Left lung (tissue), 14 donors: ENCODE measurements at regions of chrX and their contacts with region 1.

Region 1: GRCh38 chrX:47193475-47194193 is at the start of gene UBA1:
- DNase-seq: peak; percentile 93 to 97 (median 95)
- ATAC-seq: peak; percentile 92
- H3K4me3 ChIP-seq: peak within 1 kb of the TSS; percentile 65 to 91
- H3K27ac ChIP-seq: peak within 1 kb of the TSS; percentile 89 to 96
- H3K4me1 ChIP-seq: peaks cover 32 to 50% of the 10 kb centered on the region in 2 donors
- H3K27me3 ChIP-seq: no peaks in the 10 kb centered on the region
- CTCF ChIP-seq: peak; percentile 78 to 83
- polyA plus RNA-seq, gene UBA1: 192 to 246 (median 218) TPM

Region 2: GRCh38 chrX:47311932-47312774 is 118.5 kb after region 1 on chrX:
- intact Hi-C with region 1: no loop called
- DNase-seq: peak in 2 of 4 donors; percentile 44 to 59
- ATAC-seq: peak; percentile 93
- H3K4me3 ChIP-seq: no peak overlapping the region
- H3K27ac ChIP-seq: peak overlapping the region in 1 of 2 donors; percentile 57
- H3K4me1 ChIP-seq: no peaks in the 10 kb centered on the region
- H3K27me3 ChIP-seq: peaks cover 0 to 8% of the 10 kb centered on the region in 2 donors
- CTCF ChIP-seq: peak in 1 of 2 donors; percentile 33

Region 3: DNA sequence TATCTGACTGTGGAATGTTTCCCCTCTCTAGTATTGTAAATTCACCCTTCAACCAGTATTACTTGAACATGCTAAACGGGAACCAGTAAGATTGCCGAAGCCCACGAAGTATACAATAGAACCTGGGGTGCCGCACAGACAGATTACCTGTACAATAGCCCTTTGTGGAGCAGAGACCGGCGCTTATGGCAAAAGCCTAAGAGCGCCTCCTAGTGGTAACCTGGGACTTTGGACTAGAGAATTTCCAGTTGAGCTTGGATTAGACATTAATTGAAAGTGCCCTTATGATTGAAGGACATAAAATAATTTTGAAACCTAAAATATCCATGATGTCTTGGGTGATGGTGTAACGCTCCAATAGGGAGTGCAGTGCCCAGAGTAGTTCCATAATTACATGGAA is 190.9 kb after region 1 on chrX:
- intact Hi-C with region 1: loop called in 1 of 2 experiments (anchors 5 kb)
- DNase-seq: peak in 3 of 4 donors; percentile 41 to 72 (median 49)
- ATAC-seq: peak; percentile 92
- H3K4me3 ChIP-seq: no peak overlapping the region
- H3K27ac ChIP-seq: no peak overlapping the region
- H3K4me1 ChIP-seq: no peaks in the 10 kb centered on the region
- H3K27me3 ChIP-seq: no peaks in the 10 kb centered on the region
- CTCF ChIP-seq: peak; percentile 59 to 62

Region 4: DNA sequence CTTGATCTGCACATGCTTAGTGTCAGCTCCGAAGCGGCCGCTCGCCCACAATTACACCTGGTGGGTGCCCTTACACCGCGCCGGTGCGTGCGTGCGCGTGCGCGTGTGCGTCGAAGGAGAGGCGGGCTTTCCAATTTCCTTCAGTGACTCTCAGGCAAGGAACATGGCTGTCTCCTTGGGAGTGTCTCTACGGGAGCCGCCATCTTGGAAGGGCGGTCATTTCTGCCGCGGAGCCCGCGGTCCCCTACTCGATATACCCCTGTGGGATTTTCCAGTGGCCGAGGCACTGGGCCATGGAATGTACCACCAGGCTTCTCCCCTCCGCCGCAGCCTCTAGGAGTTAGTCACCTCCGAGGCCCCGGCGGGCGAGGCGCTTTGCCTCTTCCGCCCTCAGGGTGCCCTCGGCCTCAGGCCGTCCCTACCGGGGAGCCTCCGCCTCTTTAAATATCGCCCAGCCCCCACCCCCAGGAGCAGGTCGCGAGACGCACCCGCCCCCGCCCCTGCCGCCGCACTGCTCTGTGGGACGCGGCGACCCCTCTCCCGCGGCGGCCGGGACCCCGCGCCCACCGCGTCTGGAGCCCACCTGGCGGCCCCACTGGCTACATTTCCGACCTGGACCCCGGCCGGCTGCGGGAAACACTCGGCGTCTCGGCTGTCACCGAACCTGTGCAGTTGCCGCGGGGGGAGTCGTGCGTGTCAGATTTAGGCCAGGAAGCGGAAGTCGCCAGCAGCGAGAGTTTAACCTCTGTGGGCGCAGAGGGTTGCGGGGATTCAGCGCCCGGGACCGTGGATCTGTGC is 289.1 kb after region 1 on chrX and contains the start of gene ZNF41:
- intact Hi-C with region 1: no loop called
- DNase-seq: peak; percentile 70 to 85 (median 79)
- ATAC-seq: peak; percentile 93
- H3K4me3 ChIP-seq: peak within 1 kb of the TSS; percentile 49 to 58
- H3K27ac ChIP-seq: peak within 1 kb of the TSS; percentile 92 to 94
- H3K4me1 ChIP-seq: peaks cover 0 to 8% of the 10 kb centered on the region in 2 donors
- H3K27me3 ChIP-seq: no peaks in the 10 kb centered on the region
- CTCF ChIP-seq: no peak
- polyA plus RNA-seq, gene ZNF41: 12.7 to 15.4 (median 14.4) TPM

Region 5: DNA sequence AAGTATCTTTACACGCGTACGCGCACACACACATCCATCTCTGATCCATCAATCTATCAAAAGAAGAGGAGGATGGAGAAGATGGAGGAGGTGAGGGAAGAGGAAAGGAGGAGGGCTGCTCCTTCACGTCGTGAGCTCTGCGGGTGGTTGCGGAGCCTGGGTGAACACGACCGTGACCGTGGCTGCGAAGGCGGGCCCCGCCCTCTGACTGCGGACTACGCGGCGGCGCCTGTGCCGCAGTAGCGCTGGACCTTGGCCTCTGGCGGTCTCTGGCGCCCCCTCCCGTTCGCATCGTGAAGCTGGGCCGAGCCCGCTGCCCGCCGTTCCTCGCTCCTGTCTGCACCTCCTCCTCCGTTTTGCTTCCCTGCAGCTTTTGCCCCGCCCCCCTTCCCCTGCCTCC is 329.7 kb after region 1 on chrX:
- intact Hi-C with region 1: loop called in 1 of 2 experiments (anchors 10 kb)
- DNase-seq: peak; percentile 65 to 97 (median 84)
- ATAC-seq: peak; percentile 99
- H3K4me3 ChIP-seq: peak overlapping the region; percentile 20 to 37
- H3K27ac ChIP-seq: no peak overlapping the region
- H3K4me1 ChIP-seq: peaks cover 0 to 4% of the 10 kb centered on the region in 2 donors
- H3K27me3 ChIP-seq: no peaks in the 10 kb centered on the region
- CTCF ChIP-seq: peak; percentile 68 to 86